ENCODE measurements at regions of chr2 and their contacts with region 1.

Region 1: DNA sequence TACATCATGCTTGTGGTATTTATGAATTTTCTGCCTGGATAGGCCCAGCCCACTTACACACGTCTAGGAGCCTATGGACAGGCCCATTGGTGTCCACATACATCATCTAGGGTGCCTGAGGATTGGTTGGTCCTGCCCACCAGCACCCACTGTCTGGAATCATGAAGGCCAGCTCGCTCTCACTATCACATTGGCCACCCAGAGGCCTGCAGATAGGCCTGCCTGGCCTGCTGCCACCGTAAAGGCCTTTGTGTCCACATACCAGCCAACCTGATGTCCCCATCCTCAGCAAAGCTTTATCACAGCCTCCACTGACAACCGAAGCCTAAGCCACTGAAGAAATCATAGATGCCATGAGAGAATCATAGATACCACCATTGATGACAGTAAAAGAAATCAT is 40.2 kb downstream of the METTL21A start:
- DNase-seq: no peak
- ATAC-seq: no peak
- H3K4me3 ChIP-seq: no peak overlapping the region
- H3K4me3 Mint-ChIP-seq: no peak overlapping the region
- H3K27ac ChIP-seq: no peak overlapping the region
- H3K27ac Mint-ChIP-seq: peak overlapping the region in 7 of 9 donors; percentile 27 to 71 (median 46)
- H3K4me1 ChIP-seq: no peaks in the 10 kb centered on the region
- H3K4me1 Mint-ChIP-seq: peaks cover 5 to 54% (median 18%) of the 10 kb centered on the region in 7 donors
- H3K27me3 ChIP-seq: no peaks in the 10 kb centered on the region
- H3K27me3 Mint-ChIP-seq: no peaks in the 10 kb centered on the region

Region 2: DNA sequence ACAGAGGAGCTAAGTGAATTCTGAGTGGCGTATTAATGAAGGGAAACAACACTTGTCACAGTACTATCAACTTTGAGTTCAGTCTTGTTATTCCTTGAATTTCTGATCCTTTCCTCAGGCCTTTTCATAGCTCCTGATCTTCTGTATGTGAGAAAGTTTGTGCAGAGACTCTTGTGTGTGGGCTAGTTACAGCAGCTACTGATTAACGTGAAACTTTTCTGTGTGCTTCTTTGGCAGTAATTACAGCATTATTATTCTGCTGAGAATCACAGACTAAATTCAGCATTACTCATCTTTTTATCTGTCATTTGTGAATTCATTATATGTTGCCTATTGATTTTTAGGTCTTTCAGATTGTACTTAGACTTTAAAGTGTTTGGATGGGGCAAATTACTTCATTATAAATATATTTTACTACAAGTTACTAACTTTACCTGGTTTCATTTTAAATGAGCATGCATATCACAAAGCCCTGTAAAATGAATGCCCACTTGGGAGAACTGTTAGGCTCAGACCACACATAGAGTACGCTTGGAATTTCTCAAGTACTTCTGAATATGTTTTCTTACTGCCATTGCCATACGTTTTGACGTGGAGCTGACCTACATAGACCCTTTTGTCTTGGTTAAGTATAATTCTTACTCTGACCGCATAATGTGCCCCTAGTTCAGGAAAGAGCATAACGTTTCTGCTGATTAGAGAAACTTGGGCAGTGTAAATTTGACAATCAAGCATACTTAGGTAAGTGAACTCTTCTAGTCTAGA is 19.0 kb before region 1 on chr2:
- CTCF ChIA-PET with region 1: no interaction called
- POLR2A ChIA-PET with region 1: no interaction called
- intact Hi-C with region 1: loop called in 1 of 2 experiments (anchors 2 kb)
- DNase-seq: no peak
- ATAC-seq: no peak
- H3K4me3 ChIP-seq: no peak overlapping the region
- H3K4me3 Mint-ChIP-seq: no peak overlapping the region
- H3K27ac ChIP-seq: no peak overlapping the region
- H3K27ac Mint-ChIP-seq: peak overlapping the region in 7 of 9 donors; percentile 22 to 75 (median 41)
- H3K4me1 ChIP-seq: no peaks in the 10 kb centered on the region
- H3K4me1 Mint-ChIP-seq: peaks cover 5 to 46% (median 25%) of the 10 kb centered on the region in 7 donors
- H3K27me3 ChIP-seq: no peaks in the 10 kb centered on the region
- H3K27me3 Mint-ChIP-seq: no peaks in the 10 kb centered on the region

Region 3: DNA sequence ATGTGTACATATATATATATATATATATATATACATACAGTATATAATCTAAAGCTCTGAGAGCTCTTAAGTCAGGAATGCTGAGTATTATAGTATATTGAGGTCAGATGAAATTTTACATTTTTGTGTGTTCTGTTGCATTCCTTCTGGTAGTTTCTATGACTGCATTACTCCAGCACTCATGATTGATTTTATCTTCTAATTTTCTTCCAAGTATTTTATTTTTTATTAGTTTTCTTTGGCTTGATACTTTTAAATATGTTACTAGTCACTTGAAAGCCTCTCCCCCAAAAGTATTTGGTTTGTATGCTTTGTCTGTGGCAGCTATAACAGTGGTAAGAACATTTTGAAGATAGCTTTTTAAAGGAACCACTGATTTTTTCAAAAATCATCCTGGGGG is 15.3 kb after region 1 on chr2:
- CTCF ChIA-PET with region 1: interaction called, 3 read pairs
- POLR2A ChIA-PET with region 1: no interaction called
- intact Hi-C with region 1: loop called in 1 of 2 experiments (anchors 2 kb)
- DNase-seq: no peak
- ATAC-seq: no peak
- H3K4me3 ChIP-seq: no peak overlapping the region
- H3K4me3 Mint-ChIP-seq: no peak overlapping the region
- H3K27ac ChIP-seq: no peak overlapping the region
- H3K27ac Mint-ChIP-seq: peak overlapping the region in 5 of 9 donors; percentile 17 to 81 (median 34)
- H3K4me1 ChIP-seq: peaks cover 0 to 3% of the 10 kb centered on the region in 2 donors
- H3K4me1 Mint-ChIP-seq: peaks cover 4 to 46% (median 25%) of the 10 kb centered on the region in 7 donors
- H3K27me3 ChIP-seq: no peaks in the 10 kb centered on the region
- H3K27me3 Mint-ChIP-seq: no peaks in the 10 kb centered on the region